Activated T-helper 2 cell treated with anti-CD3 and anti-CD28 coated beads, Interferon-gamma antibody, Interleukin-2, Interleukin-4, amounts not matched to agents 10 μg/mL and 5 μg/mL and 100 μg/mL, durations not matched to agents 14 hours and 24 hours and 36 hours (primary cell): ENCODE measurements at regions of chr1 and their contacts with region 1.

Region 1: GRCh38 chr1:162056043-162056442 is 13.4 kb upstream of the NOS1AP start:
- DNase-seq: peak; percentile 14
- H3K4me3 Mint-ChIP-seq: no peak overlapping the region
- H3K27ac Mint-ChIP-seq: no peak overlapping the region
- H3K4me1 Mint-ChIP-seq: no peaks in the 10 kb centered on the region
- H3K27me3 Mint-ChIP-seq: peaks cover 6% of the 10 kb centered on the region

Region 2: DNA sequence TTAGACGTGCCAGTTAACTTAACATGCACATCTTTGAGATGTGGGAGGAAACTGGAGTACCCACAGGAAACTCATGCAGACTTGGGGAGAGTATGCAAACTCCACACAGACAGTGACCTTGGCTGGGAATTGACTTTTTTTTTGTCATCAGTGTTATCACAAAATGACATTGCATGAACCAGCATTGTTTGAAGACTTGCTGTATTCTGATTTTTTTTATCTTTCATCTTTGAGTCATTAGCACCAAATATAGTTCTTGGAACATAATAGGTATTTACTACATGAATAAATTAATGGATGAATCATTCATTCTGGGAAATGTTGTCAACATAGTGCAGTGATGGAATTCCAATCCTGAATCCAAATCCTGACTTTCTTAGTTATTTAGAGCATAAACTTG is 212.9 kb before region 1 on chr1:
- intact Hi-C with region 1: no loop called
- DNase-seq: no peak
- H3K4me3 Mint-ChIP-seq: no peak overlapping the region
- H3K27ac Mint-ChIP-seq: no peak overlapping the region
- H3K4me1 Mint-ChIP-seq: peaks cover 11% of the 10 kb centered on the region
- H3K27me3 Mint-ChIP-seq: no peaks in the 10 kb centered on the region

Region 3: GRCh38 chr1:162136760-162137159 is 80.7 kb after region 1 on chr1:
- intact Hi-C with region 1: no loop called
- DNase-seq: no peak
- H3K4me3 Mint-ChIP-seq: no peak overlapping the region
- H3K27ac Mint-ChIP-seq: no peak overlapping the region
- H3K4me1 Mint-ChIP-seq: no peaks in the 10 kb centered on the region
- H3K27me3 Mint-ChIP-seq: peaks cover 34% of the 10 kb centered on the region

Region 4: DNA sequence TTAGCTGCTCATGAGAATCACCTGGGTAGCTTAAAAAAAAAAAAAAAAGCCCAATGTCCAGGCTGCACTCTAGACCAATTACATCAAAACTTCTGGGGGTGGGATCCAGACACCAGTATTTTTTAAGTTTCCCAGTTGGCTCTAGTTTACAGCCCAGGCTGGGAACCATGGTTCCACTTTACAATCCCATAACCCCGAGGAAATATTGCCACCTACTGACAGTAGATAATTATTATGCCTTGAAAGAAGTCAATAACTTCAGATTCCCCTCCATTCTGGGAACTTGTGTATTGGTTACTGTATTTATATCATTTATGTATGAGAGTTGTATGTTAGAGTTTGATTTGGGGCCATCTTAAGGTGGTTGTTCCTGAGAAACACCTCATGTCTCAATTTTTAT is 220.4 kb after region 1 on chr1:
- intact Hi-C with region 1: loop called (anchors 1 kb)
- DNase-seq: no peak
- H3K4me3 Mint-ChIP-seq: no peak overlapping the region
- H3K27ac Mint-ChIP-seq: no peak overlapping the region
- H3K4me1 Mint-ChIP-seq: no peaks in the 10 kb centered on the region
- H3K27me3 Mint-ChIP-seq: peaks cover 8% of the 10 kb centered on the region

Region 5: GRCh38 chr1:162391790-162392563 is 335.9 kb after region 1 on chr1:
- intact Hi-C with region 1: loop called (anchors 2 kb)
- DNase-seq: no peak
- H3K4me3 Mint-ChIP-seq: no peak overlapping the region
- H3K27ac Mint-ChIP-seq: no peak overlapping the region
- H3K4me1 Mint-ChIP-seq: peaks cover 6% of the 10 kb centered on the region
- H3K27me3 Mint-ChIP-seq: peaks cover 21% of the 10 kb centered on the region